ENCODE measurements at regions of chr12 and their contacts with region 1.

Region 1: DNA sequence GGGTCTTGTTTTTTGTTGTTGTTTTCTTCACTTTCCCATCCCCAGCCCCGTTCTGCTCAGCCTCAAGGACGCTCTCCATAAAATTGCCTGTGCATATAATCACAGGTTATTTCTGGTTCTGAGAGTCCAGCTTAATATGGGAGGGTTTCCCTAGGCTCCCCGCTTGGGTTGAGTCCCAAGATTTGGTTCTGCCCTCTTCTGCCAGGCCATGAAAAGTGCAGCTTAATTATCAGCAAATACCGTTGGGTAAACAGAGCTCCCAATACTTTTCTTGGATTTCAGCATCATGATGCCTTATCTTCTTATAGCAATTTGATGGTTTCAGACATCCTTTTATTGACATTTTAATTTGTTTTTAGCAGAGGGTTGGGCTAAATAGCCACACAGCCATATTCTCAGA is 75.6 kb downstream of the GRIN2B start:
- DNase-seq: no peak
- ATAC-seq: peak; percentile 51; the same call in 1 of the 2 replicates
- H3K4me3 Mint-ChIP-seq: no peak overlapping the region
- H3K27ac Mint-ChIP-seq: no peak overlapping the region
- H3K4me1 Mint-ChIP-seq: no peaks in the 10 kb centered on the region
- H3K27me3 Mint-ChIP-seq: no peaks in the 10 kb centered on the region
- CTCF ChIP-seq: no peak

Region 2: DNA sequence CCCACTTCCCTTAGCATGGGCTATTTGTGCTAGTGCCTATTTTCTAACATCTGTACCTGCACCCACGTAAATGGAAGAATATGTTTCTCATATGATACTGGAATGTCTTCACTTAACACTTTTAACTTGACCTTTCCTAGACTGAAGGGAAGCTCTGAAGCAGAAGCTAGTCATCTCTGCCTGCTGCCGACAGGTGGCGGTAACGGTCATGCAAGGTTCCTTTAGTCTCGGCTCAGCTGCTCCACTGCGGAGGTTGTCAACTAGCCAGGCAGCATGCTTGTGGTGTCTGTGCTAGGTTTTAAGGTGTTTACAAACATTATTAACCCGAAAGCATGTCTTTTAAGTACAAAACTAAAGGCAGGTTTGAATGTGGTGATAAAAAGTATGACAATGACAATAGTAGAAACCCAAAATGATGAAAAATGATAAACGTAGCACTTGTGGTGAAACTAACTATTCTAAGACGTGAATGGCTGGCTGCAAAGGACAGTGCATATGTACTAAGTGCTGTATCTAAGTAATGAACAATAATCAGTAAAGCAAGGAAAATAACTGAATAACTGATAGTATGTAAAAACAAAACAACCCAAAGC is 41.6 kb before region 1 on chr12:
- CTCF ChIA-PET with region 1: interaction called, 10 read pairs
- POLR2A ChIA-PET with region 1: no interaction called
- DNase-seq: peak; percentile 79
- ATAC-seq: peak; percentile 97
- H3K4me3 Mint-ChIP-seq: no peak overlapping the region
- H3K27ac Mint-ChIP-seq: no peak overlapping the region
- H3K4me1 Mint-ChIP-seq: peaks cover 9% of the 10 kb centered on the region
- H3K27me3 Mint-ChIP-seq: no peaks in the 10 kb centered on the region; the same call in 1 of the 2 replicates
- CTCF ChIP-seq: peak; percentile 72